CD4-positive, alpha-beta T cell (primary cell): ENCODE measurements at regions of chr3 and their contacts with region 1.

Region 1: DNA sequence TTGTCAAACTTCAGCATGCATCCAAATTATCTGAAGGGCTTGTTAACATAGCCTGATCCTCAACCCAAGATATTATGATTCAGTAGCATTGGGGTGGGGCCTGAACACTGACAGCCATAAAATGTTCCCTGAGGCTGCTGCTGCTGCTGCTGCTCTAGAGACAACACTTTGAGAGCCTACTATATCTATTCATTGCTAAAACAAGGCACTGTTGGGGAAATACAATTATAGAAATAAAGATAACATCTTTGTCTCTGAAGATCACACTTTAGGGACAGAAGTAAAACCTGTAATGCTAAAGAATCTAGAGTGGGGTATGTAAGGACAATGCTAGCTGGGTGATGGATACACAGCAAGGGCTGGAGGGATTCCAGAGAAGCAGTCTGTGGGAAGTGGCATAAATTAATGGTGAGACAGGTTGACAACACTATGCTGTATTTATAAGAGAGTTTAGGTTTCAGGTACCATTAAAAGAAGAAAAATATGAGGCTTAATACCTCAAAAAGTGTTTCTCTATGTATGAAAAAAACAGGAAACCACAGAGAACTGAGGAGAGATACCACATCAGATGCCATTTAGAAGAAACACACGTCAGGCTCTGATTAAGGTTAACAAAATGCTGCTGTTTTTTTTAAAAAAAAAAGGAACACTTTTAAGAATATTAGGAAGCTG is 115.9 kb downstream of the CBLB start:
- DNase-seq: peak; percentile 27 to 90 (median 44)
- ATAC-seq: peak; percentile 81
- H3K4me3 ChIP-seq: peak overlapping the region; percentile 19
- H3K4me3 Mint-ChIP-seq: peak overlapping the region; percentile 77
- H3K27ac ChIP-seq: peak overlapping the region; percentile 65 to 67
- H3K27ac Mint-ChIP-seq: peak overlapping the region; percentile 94
- H3K4me1 ChIP-seq: peaks cover 35% of the 10 kb centered on the region
- H3K4me1 Mint-ChIP-seq: peaks cover 90% of the 10 kb centered on the region
- H3K27me3 ChIP-seq: no peaks in the 10 kb centered on the region
- H3K27me3 Mint-ChIP-seq: no peaks in the 10 kb centered on the region
- CTCF ChIP-seq: no peak

Region 2: GRCh38 chr3:105686278-105686897 is 66.5 kb before region 1 on chr3:
- CTCF ChIA-PET with region 1: no interaction called
- POLR2A ChIA-PET with region 1: no interaction called
- intact Hi-C with region 1: loop called in 1 of 2 experiments (anchors 1 kb)
- DNase-seq: peak in 3 of 14 experiments; percentile 52 to 59 (median 58)
- ATAC-seq: peak; percentile 57
- H3K4me3 ChIP-seq: no peak overlapping the region
- H3K4me3 Mint-ChIP-seq: no peak overlapping the region
- H3K27ac ChIP-seq: no peak overlapping the region
- H3K27ac Mint-ChIP-seq: peak overlapping the region; percentile 61
- H3K4me1 ChIP-seq: no peaks in the 10 kb centered on the region
- H3K4me1 Mint-ChIP-seq: peaks cover 28% of the 10 kb centered on the region
- H3K27me3 ChIP-seq: no peaks in the 10 kb centered on the region
- H3K27me3 Mint-ChIP-seq: no peaks in the 10 kb centered on the region
- CTCF ChIP-seq: peak; percentile 95

Region 3: DNA sequence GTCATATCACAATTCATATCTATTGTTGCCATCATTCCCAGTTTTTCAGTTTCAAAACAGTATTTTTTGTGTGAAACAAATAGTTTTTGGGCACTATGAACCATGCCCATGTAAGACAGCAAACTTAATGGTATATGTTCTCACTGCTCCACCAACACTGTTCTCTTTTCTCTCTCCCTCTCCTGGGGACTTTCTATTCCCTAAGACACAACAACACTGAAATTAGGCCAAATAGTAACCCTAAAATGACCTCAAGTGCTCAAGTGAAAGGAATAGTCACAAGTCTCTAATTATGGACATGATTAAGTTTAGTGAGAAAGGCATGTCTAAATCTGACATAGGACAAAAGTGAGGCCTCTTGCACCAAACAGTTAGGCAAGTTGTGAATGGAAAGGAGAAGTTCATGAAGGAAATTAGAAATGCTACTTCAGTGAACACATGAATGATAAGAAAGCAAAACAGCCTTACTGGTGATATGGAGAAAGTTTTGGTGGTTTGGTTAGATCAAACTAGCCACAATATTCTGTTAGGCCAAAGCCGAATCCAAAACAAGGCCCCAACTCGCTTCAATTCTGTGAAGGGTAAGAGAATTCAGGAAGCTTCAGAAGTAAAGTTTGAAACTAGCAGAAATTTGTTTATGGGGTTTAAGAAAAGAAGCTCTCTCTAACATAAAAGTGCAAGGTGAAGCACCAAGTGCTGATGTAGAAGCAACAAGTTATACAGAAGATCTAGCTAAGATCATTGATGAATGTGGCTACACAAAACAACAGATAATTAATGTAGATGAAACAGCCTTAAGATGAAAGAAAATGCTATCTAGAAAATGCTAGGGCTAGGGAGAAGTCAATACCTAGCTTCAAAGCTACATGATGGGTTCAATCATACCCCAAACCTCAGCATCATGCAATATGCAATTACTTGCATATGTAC is 11.8 kb after region 1 on chr3:
- CTCF ChIA-PET with region 1: no interaction called
- POLR2A ChIA-PET with region 1: interaction called, 5 read pairs
- intact Hi-C with region 1: loop called in 1 of 2 experiments (anchors 1 kb)
- DNase-seq: peak in 3 of 14 experiments; percentile 46 to 59 (median 48)
- ATAC-seq: peak; percentile 57
- H3K4me3 ChIP-seq: no peak overlapping the region
- H3K4me3 Mint-ChIP-seq: peak overlapping the region; percentile 63
- H3K27ac ChIP-seq: peak overlapping the region in 1 of 2 donors; percentile 45
- H3K27ac Mint-ChIP-seq: peak overlapping the region; percentile 88
- H3K4me1 ChIP-seq: peaks cover 9% of the 10 kb centered on the region
- H3K4me1 Mint-ChIP-seq: peaks cover 76% of the 10 kb centered on the region
- H3K27me3 ChIP-seq: no peaks in the 10 kb centered on the region
- H3K27me3 Mint-ChIP-seq: no peaks in the 10 kb centered on the region
- CTCF ChIP-seq: no peak

Region 4: DNA sequence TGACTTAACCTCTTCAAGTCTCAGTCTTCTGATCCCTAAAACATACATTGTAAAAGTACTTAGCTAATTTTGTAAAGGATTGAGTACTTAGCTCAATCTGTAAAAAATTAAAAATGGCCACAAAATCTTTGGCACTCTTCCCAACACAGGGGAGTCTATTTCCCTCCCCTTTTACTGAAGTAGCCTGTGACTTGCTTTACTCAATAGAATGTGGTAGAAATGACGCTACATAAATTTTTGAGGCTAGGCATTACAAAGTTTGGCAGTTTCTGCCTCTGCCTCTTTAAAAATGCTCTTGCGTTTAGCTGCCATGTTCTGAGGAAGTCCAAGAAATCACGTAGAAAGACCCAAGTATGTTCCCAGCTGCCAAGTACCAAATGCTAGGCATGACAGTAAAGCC is 35.7 kb after region 1 on chr3:
- CTCF ChIA-PET with region 1: no interaction called
- POLR2A ChIA-PET with region 1: no interaction called
- intact Hi-C with region 1: loop called in 1 of 2 experiments (anchors 5 kb)
- DNase-seq: no peak
- ATAC-seq: no peak
- H3K4me3 ChIP-seq: no peak overlapping the region
- H3K4me3 Mint-ChIP-seq: no peak overlapping the region
- H3K27ac ChIP-seq: no peak overlapping the region
- H3K27ac Mint-ChIP-seq: no peak overlapping the region
- H3K4me1 ChIP-seq: peaks cover 5% of the 10 kb centered on the region
- H3K4me1 Mint-ChIP-seq: peaks cover 80% of the 10 kb centered on the region
- H3K27me3 ChIP-seq: no peaks in the 10 kb centered on the region
- H3K27me3 Mint-ChIP-seq: no peaks in the 10 kb centered on the region
- CTCF ChIP-seq: no peak

Region 5: GRCh38 chr3:105827959-105828358 is 75.1 kb after region 1 on chr3:
- CTCF ChIA-PET with region 1: no interaction called
- POLR2A ChIA-PET with region 1: interaction called, 4 read pairs
- intact Hi-C with region 1: loop called in 1 of 2 experiments (anchors 2 kb)
- DNase-seq: peak in 1 of 14 experiments; percentile 20
- ATAC-seq: no peak
- H3K4me3 ChIP-seq: no peak overlapping the region
- H3K4me3 Mint-ChIP-seq: no peak overlapping the region
- H3K27ac ChIP-seq: peak overlapping the region in 1 of 2 donors; percentile 2
- H3K27ac Mint-ChIP-seq: peak overlapping the region; percentile 63
- H3K4me1 ChIP-seq: peaks cover 20% of the 10 kb centered on the region
- H3K4me1 Mint-ChIP-seq: peaks cover 85% of the 10 kb centered on the region
- H3K27me3 ChIP-seq: no peaks in the 10 kb centered on the region
- H3K27me3 Mint-ChIP-seq: no peaks in the 10 kb centered on the region
- CTCF ChIP-seq: no peak

Region 6: DNA sequence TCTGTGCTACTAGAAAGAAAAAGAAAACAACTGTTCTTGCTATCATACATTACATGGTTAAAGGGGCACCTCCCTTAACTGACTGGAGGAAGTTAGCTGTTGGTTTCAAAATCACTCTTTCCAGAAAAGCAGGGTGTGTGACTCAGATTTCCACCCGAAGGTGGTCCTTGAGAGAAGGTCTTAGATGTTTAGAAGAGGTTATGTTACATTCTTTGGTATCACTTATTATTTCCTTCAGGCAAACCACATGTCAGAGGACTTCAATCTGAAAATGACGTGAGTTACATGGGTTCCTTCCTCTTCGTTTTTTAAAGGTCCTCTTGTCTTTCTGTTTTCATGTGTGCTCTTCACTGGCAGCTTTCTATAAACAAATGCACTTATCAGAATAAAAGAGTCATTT is 423.9 kb after region 1 on chr3:
- CTCF ChIA-PET with region 1: no interaction called
- POLR2A ChIA-PET with region 1: no interaction called
- intact Hi-C with region 1: loop called in 1 of 2 experiments (anchors 5 kb)
- DNase-seq: peak in 13 of 14 experiments; percentile 4 to 84 (median 45)
- ATAC-seq: peak; percentile 92
- H3K4me3 ChIP-seq: peak overlapping the region; percentile 40
- H3K4me3 Mint-ChIP-seq: peak overlapping the region; percentile 78
- H3K27ac ChIP-seq: peak overlapping the region in 1 of 2 donors; percentile 72
- H3K27ac Mint-ChIP-seq: peak overlapping the region; percentile 79
- H3K4me1 ChIP-seq: peaks cover 19% of the 10 kb centered on the region
- H3K4me1 Mint-ChIP-seq: peaks cover 53% of the 10 kb centered on the region
- H3K27me3 ChIP-seq: no peaks in the 10 kb centered on the region
- H3K27me3 Mint-ChIP-seq: no peaks in the 10 kb centered on the region
- CTCF ChIP-seq: no peak